ENCODE measurements at regions of chr20 and their contacts with region 1.

Region 1: DNA sequence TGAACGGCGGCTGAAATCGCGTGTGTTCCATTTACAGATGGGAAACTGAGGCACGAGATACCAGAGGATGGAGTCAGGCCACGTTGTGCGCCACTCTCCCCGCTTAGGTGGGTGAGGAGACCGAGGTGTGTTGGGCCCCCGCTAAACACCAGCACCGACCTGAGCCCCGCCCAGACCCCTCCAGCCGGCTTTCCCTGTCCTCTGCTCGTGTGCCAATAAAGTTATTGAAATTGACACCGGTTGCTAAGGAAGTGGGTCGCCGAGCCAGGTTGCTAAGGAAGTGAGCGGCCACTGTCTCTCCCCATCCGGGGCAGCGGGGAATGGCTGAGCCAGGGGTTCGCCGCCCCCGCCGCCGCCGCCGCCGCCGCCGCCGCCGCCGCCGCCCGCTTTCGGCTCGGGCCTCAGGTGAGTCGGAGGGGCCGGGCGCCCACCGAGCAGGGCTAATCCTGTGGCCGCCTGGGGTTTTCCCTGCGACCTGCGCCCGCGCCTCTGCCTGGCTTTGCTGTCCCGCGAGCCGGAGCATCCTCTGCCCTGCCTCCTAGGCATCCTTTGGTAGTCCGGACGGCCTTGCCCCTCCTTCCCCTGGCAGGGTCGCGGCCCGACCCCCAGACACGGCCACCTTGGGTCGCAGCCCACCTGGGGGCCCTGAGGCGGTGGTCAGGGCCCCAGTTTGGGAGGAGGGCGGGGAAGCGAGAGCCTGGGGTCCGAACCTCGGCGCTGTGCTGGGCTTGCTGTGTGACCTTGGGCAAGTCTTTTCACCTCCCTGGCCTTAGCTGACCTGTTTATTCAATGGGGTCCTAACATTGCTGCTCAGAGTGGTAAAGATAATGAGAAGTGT is at the start of gene KIF3B:
- DNase-seq: peak; percentile 62 to 87 (median 85)
- ATAC-seq: peak; percentile 95
- H3K4me3 ChIP-seq: peak within 1 kb of the TSS; percentile 82
- H3K4me3 Mint-ChIP-seq: peak within 1 kb of the TSS; percentile 85 to 93 (median 88)
- H3K27ac ChIP-seq: peak within 1 kb of the TSS; percentile 88
- H3K27ac Mint-ChIP-seq: peak within 1 kb of the TSS; percentile 78 to 97 (median 88)
- H3K4me1 ChIP-seq: peaks cover 9 to 13% of the 10 kb centered on the region in 2 donors
- H3K4me1 Mint-ChIP-seq: peaks cover 24 to 51% (median 39%) of the 10 kb centered on the region in 7 donors
- H3K27me3 ChIP-seq: no peaks in the 10 kb centered on the region
- H3K27me3 Mint-ChIP-seq: no peaks in the 10 kb centered on the region
- total RNA-seq, gene KIF3B: 9.3 to 19.5 (median 11.5) TPM

Region 2: DNA sequence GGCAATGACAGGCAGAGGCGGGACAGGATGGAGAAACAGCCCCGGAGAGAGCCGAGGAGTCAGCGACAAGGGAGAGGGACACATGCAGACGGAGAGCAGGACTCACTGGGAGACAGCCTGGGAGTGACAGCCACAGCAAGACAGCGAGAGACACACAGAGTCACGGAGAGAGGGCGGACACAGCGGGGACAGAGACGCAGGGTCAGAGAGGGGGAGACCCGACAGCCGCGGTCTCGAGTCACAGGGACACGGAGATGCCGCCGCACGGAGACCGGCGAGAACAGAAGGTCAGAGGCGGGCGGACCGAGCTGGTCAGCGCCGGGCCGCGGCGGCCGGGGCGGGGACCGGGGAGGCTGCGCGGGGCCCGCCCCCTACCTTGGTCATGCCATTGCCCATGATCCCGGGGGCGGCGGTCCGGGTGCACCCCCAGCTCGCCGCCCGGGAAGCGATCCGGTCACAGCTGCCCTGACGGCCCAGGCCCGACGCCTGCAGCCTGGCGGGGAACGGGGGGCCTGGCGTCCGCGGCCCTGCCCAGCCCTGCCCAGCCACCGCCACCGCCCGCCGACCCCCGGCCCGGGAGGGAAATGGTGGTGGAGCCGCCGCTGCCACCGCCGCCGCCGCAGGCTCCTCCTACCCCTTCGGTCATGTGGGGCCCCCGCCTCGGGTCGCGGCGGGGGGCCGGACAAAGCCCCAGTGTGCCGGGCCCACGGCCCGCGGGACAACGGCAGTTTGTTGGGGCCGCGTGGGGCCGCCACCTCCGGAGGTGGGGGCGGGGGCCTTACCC is 407.4 kb before region 1 on chr20 and contains the starts of genes DUSP15 and TTLL9:
- CTCF ChIA-PET with region 1: no interaction called
- POLR2A ChIA-PET with region 1: no interaction called
- intact Hi-C with region 1: no loop called
- DNase-seq: no peak
- ATAC-seq: peak; percentile 49
- H3K4me3 ChIP-seq: peak within 1 kb of the TSS; percentile 52
- H3K4me3 Mint-ChIP-seq: peak within 1 kb of the TSS; percentile 83 to 99 (median 89)
- H3K27ac ChIP-seq: no peak within 1 kb of the TSS
- H3K27ac Mint-ChIP-seq: peak within 1 kb of the TSS in 4 of 9 donors; percentile 17 to 88 (median 52)
- H3K4me1 ChIP-seq: peaks cover 0 to 4% of the 10 kb centered on the region in 2 donors
- H3K4me1 Mint-ChIP-seq: peaks cover 10 to 15% (median 13%) of the 10 kb centered on the region in 7 donors
- H3K27me3 ChIP-seq: peaks cover 11 to 23% of the 10 kb centered on the region in 2 donors
- H3K27me3 Mint-ChIP-seq: peaks cover 41 to 72% (median 42%) of the 10 kb centered on the region in 5 donors
- total RNA-seq, gene DUSP15: not detected
- total RNA-seq, gene TTLL9: not detected

Region 3: GRCh38 chr20:32109392-32110172 is 168.0 kb before region 1 on chr20 and contains the start of gene TM9SF4:
- CTCF ChIA-PET with region 1: no interaction called
- POLR2A ChIA-PET with region 1: no interaction called
- intact Hi-C with region 1: loop called in 1 of 2 experiments (anchors 1 kb)
- DNase-seq: peak; percentile 87 to 96 (median 93)
- ATAC-seq: peak; percentile 92
- H3K4me3 ChIP-seq: peak within 1 kb of the TSS; percentile 92
- H3K4me3 Mint-ChIP-seq: peak within 1 kb of the TSS; percentile 78 to 100 (median 96)
- H3K27ac ChIP-seq: peak within 1 kb of the TSS; percentile 94
- H3K27ac Mint-ChIP-seq: peak within 1 kb of the TSS; percentile 95 to 100 (median 100)
- H3K4me1 ChIP-seq: peaks cover 11% of the 10 kb centered on the region in 2 donors
- H3K4me1 Mint-ChIP-seq: peaks cover 26 to 44% (median 39%) of the 10 kb centered on the region in 7 donors
- H3K27me3 ChIP-seq: no peaks in the 10 kb centered on the region
- H3K27me3 Mint-ChIP-seq: no peaks in the 10 kb centered on the region
- total RNA-seq, gene TM9SF4: 35.2 to 61.0 (median 41.5) TPM

Region 4: DNA sequence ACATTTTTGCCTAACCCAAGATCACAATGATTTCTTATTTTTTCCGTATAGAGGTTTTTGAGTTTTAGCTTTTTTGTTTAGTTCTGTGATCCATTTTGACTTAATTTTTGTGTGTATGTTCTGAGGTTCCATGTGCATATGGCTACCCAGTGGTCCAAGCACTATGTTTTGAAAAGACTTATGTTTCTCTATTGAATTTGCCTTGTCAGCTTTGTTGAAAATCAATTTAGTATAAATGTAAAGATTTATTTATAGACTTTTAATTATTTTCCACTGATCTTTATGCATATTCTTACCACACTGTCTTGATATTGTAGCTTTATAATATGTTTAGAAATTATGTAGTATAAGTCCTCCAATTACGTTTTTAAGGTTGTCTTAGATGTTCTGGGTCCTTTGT is 157.8 kb before region 1 on chr20:
- CTCF ChIA-PET with region 1: no interaction called
- POLR2A ChIA-PET with region 1: no interaction called
- intact Hi-C with region 1: no loop called
- DNase-seq: no peak
- ATAC-seq: no peak
- H3K4me3 ChIP-seq: no peak overlapping the region
- H3K4me3 Mint-ChIP-seq: no peak overlapping the region
- H3K27ac ChIP-seq: no peak overlapping the region
- H3K27ac Mint-ChIP-seq: no peak overlapping the region
- H3K4me1 ChIP-seq: no peaks in the 10 kb centered on the region
- H3K4me1 Mint-ChIP-seq: peaks cover 20 to 58% (median 36%) of the 10 kb centered on the region in 7 donors
- H3K27me3 ChIP-seq: no peaks in the 10 kb centered on the region
- H3K27me3 Mint-ChIP-seq: no peaks in the 10 kb centered on the region

Region 5: DNA sequence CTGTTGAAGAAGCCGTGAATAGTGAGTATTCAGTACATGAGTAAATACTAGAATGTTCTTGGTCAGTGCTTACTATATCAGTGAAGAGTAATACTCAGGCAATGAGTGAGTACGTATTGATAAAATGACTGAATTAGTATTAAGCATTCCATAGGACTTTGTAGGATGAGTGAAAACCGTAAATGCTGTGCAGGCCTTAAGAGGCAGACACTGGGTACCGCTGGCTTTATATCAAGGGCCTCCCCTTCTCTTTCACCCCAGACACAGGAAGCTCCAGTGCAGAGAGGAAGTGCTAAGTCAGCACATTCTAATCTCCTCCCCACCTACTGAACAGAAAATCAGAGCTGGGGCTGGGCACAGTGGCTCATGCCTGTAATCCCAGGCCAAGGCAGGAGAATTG is 45.7 kb before region 1 on chr20:
- CTCF ChIA-PET with region 1: interaction called, 3 read pairs
- POLR2A ChIA-PET with region 1: no interaction called
- intact Hi-C with region 1: loop called in 1 of 2 experiments (anchors 5 kb)
- DNase-seq: peak in 7 of 9 donors; percentile 11 to 46 (median 42)
- ATAC-seq: peak; percentile 85
- H3K4me3 ChIP-seq: no peak overlapping the region
- H3K4me3 Mint-ChIP-seq: peak overlapping the region in 5 of 10 donors; percentile 1 to 56 (median 48)
- H3K27ac ChIP-seq: peak overlapping the region; percentile 25
- H3K27ac Mint-ChIP-seq: peak overlapping the region; percentile 30 to 95 (median 90)
- H3K4me1 ChIP-seq: peaks cover 10 to 12% of the 10 kb centered on the region in 2 donors
- H3K4me1 Mint-ChIP-seq: peaks cover 14 to 30% (median 21%) of the 10 kb centered on the region in 7 donors
- H3K27me3 ChIP-seq: no peaks in the 10 kb centered on the region
- H3K27me3 Mint-ChIP-seq: no peaks in the 10 kb centered on the region

Region 6: DNA sequence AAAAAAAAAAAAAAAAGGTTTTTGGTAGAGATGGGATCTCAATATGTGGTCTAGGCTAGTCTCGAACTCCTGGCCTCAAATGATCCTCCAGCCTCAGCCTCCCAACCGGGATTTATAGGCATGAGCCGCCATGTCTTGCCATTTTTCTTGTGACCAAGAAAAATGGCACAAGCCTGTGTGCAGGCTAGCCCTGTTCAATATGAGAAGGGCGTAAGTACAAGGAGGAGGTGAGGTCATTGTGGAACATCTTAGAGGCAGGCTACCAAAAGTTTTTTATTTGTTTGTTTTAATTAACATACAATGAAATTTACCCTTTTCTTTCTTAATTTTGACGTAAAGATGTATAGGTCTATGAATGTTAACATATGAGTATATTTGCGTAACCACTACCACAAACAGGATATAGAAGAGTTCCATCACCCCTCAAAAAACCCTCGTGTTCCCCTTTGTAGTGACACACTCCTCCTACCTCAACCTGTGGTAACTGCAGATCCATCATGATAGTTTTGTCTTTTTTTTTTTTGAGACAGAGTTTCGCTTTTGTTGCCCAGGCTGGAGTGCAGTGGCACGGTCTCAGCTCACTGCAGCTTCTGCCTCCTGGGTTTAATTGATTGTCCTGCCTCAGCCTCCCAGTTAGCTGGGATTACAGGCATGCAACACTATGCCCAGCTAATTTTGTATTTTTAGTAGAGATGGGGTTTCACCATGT is 28.4 kb before region 1 on chr20:
- CTCF ChIA-PET with region 1: interaction called, 3 read pairs
- POLR2A ChIA-PET with region 1: no interaction called
- intact Hi-C with region 1: loop called (anchors 1 kb)
- DNase-seq: peak in 8 of 9 donors; percentile 43 to 87 (median 78)
- ATAC-seq: peak; percentile 98
- H3K4me3 ChIP-seq: no peak overlapping the region
- H3K4me3 Mint-ChIP-seq: peak overlapping the region in 9 of 10 donors; percentile 18 to 68 (median 33)
- H3K27ac ChIP-seq: peak overlapping the region; percentile 38
- H3K27ac Mint-ChIP-seq: peak overlapping the region; percentile 39 to 92 (median 84)
- H3K4me1 ChIP-seq: no peaks in the 10 kb centered on the region
- H3K4me1 Mint-ChIP-seq: peaks cover 2 to 35% (median 28%) of the 10 kb centered on the region in 7 donors
- H3K27me3 ChIP-seq: no peaks in the 10 kb centered on the region
- H3K27me3 Mint-ChIP-seq: no peaks in the 10 kb centered on the region

Region 7: GRCh38 chr20:32321390-32321789 is 43.8 kb after region 1 on chr20:
- CTCF ChIA-PET with region 1: no interaction called
- POLR2A ChIA-PET with region 1: no interaction called
- intact Hi-C with region 1: loop called in 1 of 2 experiments (anchors 5 kb)
- DNase-seq: no peak
- ATAC-seq: no peak
- H3K4me3 ChIP-seq: no peak overlapping the region
- H3K4me3 Mint-ChIP-seq: no peak overlapping the region
- H3K27ac ChIP-seq: no peak overlapping the region
- H3K27ac Mint-ChIP-seq: no peak overlapping the region
- H3K4me1 ChIP-seq: no peaks in the 10 kb centered on the region
- H3K4me1 Mint-ChIP-seq: peaks cover 0 to 4% (median 0%) of the 10 kb centered on the region in 7 donors
- H3K27me3 ChIP-seq: no peaks in the 10 kb centered on the region
- H3K27me3 Mint-ChIP-seq: no peaks in the 10 kb centered on the region

Measured in naive thymus-derived CD4-positive, alpha-beta T cell (primary cell).